Activated CD4-positive, alpha-beta memory T cell treated with anti-CD3 and anti-CD28 coated beads for 36 hours (primary cell): ENCODE measurements at regions of chr9 and their contacts with region 1.

Region 1: GRCh38 chr9:130042833-130043653 is at the start of gene FNBP1:
- DNase-seq: peak; percentile 86
- H3K4me3 Mint-ChIP-seq: peak within 1 kb of the TSS; percentile 98
- H3K27ac Mint-ChIP-seq: peak within 1 kb of the TSS; percentile 99
- H3K4me1 Mint-ChIP-seq: peaks cover 37% of the 10 kb centered on the region
- H3K27me3 Mint-ChIP-seq: no peaks in the 10 kb centered on the region
- total RNA-seq, gene FNBP1: 215 to 228 TPM

Region 2: GRCh38 chr9:129845373-129845772 is 197.7 kb before region 1 on chr9:
- CTCF ChIA-PET with region 1: no interaction called
- POLR2A ChIA-PET with region 1: no interaction called
- intact Hi-C with region 1: no loop called
- DNase-seq: no peak
- H3K4me3 Mint-ChIP-seq: no peak overlapping the region
- H3K27ac Mint-ChIP-seq: peak overlapping the region; percentile 79
- H3K4me1 Mint-ChIP-seq: peaks cover 26% of the 10 kb centered on the region
- H3K27me3 Mint-ChIP-seq: no peaks in the 10 kb centered on the region

Region 3: GRCh38 chr9:129889941-129890717 is 152.9 kb before region 1 on chr9:
- CTCF ChIA-PET with region 1: interaction called, 15 read pairs
- POLR2A ChIA-PET with region 1: interaction called, 76 read pairs
- intact Hi-C with region 1: loop called (anchors 1 kb)
- DNase-seq: peak; percentile 92
- H3K4me3 Mint-ChIP-seq: peak overlapping the region; percentile 93
- H3K27ac Mint-ChIP-seq: peak overlapping the region; percentile 97
- H3K4me1 Mint-ChIP-seq: peaks cover 83% of the 10 kb centered on the region
- H3K27me3 Mint-ChIP-seq: no peaks in the 10 kb centered on the region

Region 4: GRCh38 chr9:129962889-129963703 is 79.9 kb before region 1 on chr9:
- CTCF ChIA-PET with region 1: interaction called, 3 read pairs
- POLR2A ChIA-PET with region 1: interaction called, 7 read pairs
- intact Hi-C with region 1: loop called (anchors 2 kb)
- DNase-seq: peak; percentile 86
- H3K4me3 Mint-ChIP-seq: peak overlapping the region; percentile 77
- H3K27ac Mint-ChIP-seq: peak overlapping the region; percentile 92
- H3K4me1 Mint-ChIP-seq: peaks cover 76% of the 10 kb centered on the region
- H3K27me3 Mint-ChIP-seq: no peaks in the 10 kb centered on the region

Region 5: GRCh38 chr9:129995409-129996160 is 47.5 kb before region 1 on chr9:
- CTCF ChIA-PET with region 1: interaction called, 11 read pairs
- POLR2A ChIA-PET with region 1: interaction called, 43 read pairs
- intact Hi-C with region 1: no loop called
- DNase-seq: peak; percentile 68
- H3K4me3 Mint-ChIP-seq: peak overlapping the region; percentile 64
- H3K27ac Mint-ChIP-seq: peak overlapping the region; percentile 96
- H3K4me1 Mint-ChIP-seq: peaks cover 82% of the 10 kb centered on the region
- H3K27me3 Mint-ChIP-seq: no peaks in the 10 kb centered on the region

Region 6: GRCh38 chr9:130023144-130023787 is 19.8 kb before region 1 on chr9:
- CTCF ChIA-PET with region 1: interaction called, 18 read pairs
- POLR2A ChIA-PET with region 1: interaction called, 88 read pairs
- intact Hi-C with region 1: loop called (anchors 2 kb)
- DNase-seq: no peak
- H3K4me3 Mint-ChIP-seq: peak overlapping the region; percentile 51
- H3K27ac Mint-ChIP-seq: peak overlapping the region; percentile 96
- H3K4me1 Mint-ChIP-seq: peaks cover 93% of the 10 kb centered on the region
- H3K27me3 Mint-ChIP-seq: no peaks in the 10 kb centered on the region

Region 7: GRCh38 chr9:130053504-130054324 is 10.7 kb after region 1 on chr9 and contains the start of gene GPR107:
- CTCF ChIA-PET with region 1: no interaction called
- POLR2A ChIA-PET with region 1: interaction called, 14 read pairs
- intact Hi-C with region 1: no loop called
- DNase-seq: peak; percentile 88
- H3K4me3 Mint-ChIP-seq: peak within 1 kb of the TSS; percentile 92
- H3K27ac Mint-ChIP-seq: peak within 1 kb of the TSS; percentile 90
- H3K4me1 Mint-ChIP-seq: peaks cover 32% of the 10 kb centered on the region
- H3K27me3 Mint-ChIP-seq: no peaks in the 10 kb centered on the region
- total RNA-seq, gene GPR107: 20.7 to 22.8 TPM

Region 8: GRCh38 chr9:130088051-130088450 is 45.0 kb after region 1 on chr9:
- CTCF ChIA-PET with region 1: no interaction called
- POLR2A ChIA-PET with region 1: no interaction called
- intact Hi-C with region 1: no loop called
- DNase-seq: no peak
- H3K4me3 Mint-ChIP-seq: no peak overlapping the region
- H3K27ac Mint-ChIP-seq: no peak overlapping the region
- H3K4me1 Mint-ChIP-seq: no peaks in the 10 kb centered on the region
- H3K27me3 Mint-ChIP-seq: no peaks in the 10 kb centered on the region

Region 9: DNA sequence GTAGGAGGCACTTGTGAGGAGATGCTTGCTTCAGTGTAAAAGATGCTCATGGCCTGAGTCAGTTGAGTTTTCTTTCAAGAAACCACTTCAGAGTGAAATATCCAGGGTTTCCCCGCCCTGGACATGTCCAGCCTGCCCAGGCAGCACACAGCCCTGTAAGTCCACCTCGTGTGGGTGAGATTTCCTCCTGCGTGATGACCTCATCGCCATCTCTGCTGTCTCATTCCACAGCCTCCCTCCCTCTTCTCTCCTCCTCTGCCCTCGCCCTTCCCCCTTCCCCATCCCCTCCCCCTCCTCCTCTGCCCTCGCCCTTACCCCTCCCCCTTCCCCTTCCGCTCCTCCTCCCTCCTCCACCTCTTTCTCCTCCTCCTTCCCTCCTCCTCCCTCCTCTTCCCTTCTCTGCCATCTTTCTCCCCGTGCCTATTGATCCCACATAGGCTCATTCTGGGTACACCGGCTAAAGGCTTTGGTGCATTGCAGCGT is 95.2 kb after region 1 on chr9:
- CTCF ChIA-PET with region 1: no interaction called
- POLR2A ChIA-PET with region 1: no interaction called
- intact Hi-C with region 1: no loop called
- DNase-seq: peak; percentile 46
- H3K4me3 Mint-ChIP-seq: no peak overlapping the region
- H3K27ac Mint-ChIP-seq: peak overlapping the region; percentile 66
- H3K4me1 Mint-ChIP-seq: peaks cover 49% of the 10 kb centered on the region
- H3K27me3 Mint-ChIP-seq: no peaks in the 10 kb centered on the region